Right ventricle myocardium inferior (tissue), 1 donor: ENCODE measurements at regions of chr9 and their contacts with region 1.

Region 1: GRCh38 chr9:136728080-136728547 is 14.6 kb downstream of the LCN10 start:
- DNase-seq: peak; percentile 95
- ATAC-seq: peak; percentile 88

Region 2: DNA sequence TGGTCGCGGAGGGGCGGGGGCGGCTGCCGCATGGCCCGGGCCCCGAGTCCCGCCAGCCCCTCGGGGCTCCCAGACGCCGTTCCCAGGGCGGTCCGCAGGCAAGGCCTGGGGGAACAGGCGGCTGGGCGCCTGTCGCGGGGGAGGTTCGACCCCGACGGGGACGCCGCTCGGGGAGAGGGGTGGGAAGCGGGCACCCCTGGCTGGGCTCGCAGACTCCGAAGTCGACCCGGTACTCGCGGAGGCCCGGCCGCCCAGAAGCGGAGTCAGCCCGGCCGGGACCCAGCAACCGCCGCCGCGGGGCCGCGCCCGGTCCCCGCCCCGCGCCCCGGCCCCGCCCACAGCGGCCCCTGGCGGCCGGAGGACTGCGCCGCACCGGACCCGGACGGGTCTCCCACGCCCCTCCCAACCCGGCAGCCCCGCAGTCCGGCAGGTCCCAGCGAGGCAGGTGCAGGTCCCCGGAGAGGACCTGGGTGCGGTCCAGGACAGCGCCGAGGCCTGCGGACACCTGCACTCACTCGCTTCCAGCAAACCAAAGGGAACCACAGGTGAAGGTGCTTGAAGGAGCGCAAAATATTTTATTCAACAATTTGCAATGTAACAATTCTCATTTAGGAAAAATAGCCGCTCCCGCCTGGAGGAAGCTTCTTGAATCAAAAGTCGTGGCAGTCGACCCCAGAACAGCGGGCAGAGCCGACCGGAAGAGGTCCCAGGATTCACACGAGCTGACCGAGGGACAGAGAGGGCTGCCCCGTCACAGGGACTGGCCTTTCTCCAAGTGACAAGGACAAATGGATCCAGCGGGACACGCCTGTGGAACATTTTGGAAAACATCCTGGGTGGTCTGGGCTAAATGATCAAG is 288.3 kb before region 1 on chr9 and contains the start of gene INPP5E:
- intact Hi-C with region 1: no loop called
- DNase-seq: peak; percentile 86
- ATAC-seq: peak; percentile 90
- total RNA-seq, gene INPP5E: 10.8 TPM

Region 3: GRCh38 chr9:136686794-136687711 is 41.1 kb before region 1 on chr9 and contains the start of gene AGPAT2:
- intact Hi-C with region 1: loop called (anchors 5 kb)
- DNase-seq: peak; percentile 92
- ATAC-seq: peak; percentile 82
- total RNA-seq, gene AGPAT2: 57.9 TPM